SK-N-SH (cell line): ENCODE measurements at regions of chr22 and their contacts with region 1.

Region 1: DNA sequence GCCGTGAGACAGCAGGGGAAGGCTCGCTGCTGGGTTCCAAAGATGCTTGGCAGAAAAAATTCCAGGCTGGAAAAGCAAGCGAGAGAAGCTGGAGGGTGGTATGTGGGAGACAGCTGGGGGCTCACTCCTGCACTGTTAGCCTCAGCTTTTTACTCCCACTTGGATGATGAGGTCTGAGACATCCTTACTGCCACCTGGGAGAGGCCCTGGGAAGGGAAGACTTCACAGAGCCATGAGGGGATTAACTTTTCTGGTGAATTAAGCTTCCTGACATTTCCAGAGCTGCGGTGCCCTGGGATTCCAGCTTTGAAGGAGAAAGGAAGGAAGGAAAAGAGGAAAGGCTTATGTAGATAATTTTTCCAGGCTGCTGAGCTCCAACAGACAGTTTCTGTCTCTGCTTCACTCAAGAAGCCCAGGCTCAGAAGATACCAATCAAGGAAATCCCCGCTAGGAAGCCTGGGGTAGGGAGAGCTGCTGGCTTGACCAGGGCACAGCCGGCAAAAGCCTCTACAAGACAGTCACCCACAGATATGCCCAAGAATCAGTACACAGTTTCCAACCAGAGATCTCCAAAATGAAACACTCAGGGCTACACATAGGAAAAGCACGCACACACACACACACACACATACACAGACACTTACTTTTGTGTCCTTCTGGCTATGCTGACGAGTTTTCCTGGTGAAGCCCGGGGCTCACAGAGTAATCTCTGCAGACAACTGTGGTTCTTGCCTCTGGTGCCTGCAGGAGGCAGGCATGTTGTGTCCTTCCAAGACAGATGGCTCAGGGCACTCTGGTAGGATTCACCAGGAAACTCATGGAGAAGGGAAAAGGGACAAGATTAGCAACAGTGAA is 907 bp downstream of the MCHR1 start:
- DNase-seq: no peak
- H3K4me3 ChIP-seq: no peak overlapping the region; a peak in 1 of 4 replicates
- H3K27ac ChIP-seq: no peak overlapping the region
- H3K4me1 ChIP-seq: peaks cover 0 to 21% of the 10 kb centered on the region in 2 experiments; a peak in 2 of 4 replicates
- H3K27me3 ChIP-seq: no peaks in the 10 kb centered on the region
- CTCF ChIP-seq: no peak
- EP300 ChIP-seq: no peak
- RAD21 ChIP-seq: no peak; the same call in 1 of the 2 replicates

Region 2: GRCh38 chr22:40721266-40721665 is 41.1 kb after region 1 on chr22:
- CTCF ChIA-PET with region 1: interaction called, 10 read pairs
- POLR2A ChIA-PET with region 1: no interaction called
- DNase-seq: peak; percentile 50
- H3K4me3 ChIP-seq: no peak overlapping the region
- H3K27ac ChIP-seq: peak overlapping the region; percentile 68 to 81
- H3K4me1 ChIP-seq: peaks cover 0 to 8% of the 10 kb centered on the region in 2 experiments; a peak in 3 of 4 replicates
- H3K27me3 ChIP-seq: no peaks in the 10 kb centered on the region
- CTCF ChIP-seq: no peak
- EP300 ChIP-seq: peak in 1 of 2 experiments; percentile 75; a peak in 3 of 4 replicates
- RAD21 ChIP-seq: no peak

Region 3: DNA sequence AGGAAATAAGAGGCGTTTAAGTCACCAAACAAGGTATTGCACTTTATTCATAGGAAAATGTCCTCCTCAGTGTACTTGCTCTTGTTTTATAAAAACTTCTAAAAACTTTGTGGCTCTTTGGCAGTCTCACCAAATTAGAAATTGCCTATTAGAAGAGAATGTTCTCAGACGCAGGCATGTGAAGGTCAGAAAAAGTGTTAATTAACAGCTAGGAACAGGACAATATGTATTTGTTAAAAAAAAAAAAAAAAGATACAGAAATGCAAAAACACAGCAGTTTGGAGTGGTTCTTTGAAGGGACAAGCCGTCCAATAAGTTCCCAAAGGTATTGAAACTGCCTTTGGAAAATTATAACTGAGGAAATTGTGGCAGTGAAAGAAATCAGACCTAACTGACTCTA is 71.1 kb after region 1 on chr22:
- CTCF ChIA-PET with region 1: interaction called, 10 read pairs
- POLR2A ChIA-PET with region 1: no interaction called
- DNase-seq: no peak
- H3K4me3 ChIP-seq: no peak overlapping the region
- H3K27ac ChIP-seq: no peak overlapping the region
- H3K4me1 ChIP-seq: no peaks in the 10 kb centered on the region; a peak in 1 of 4 replicates
- H3K27me3 ChIP-seq: no peaks in the 10 kb centered on the region
- CTCF ChIP-seq: no peak
- EP300 ChIP-seq: no peak
- RAD21 ChIP-seq: no peak

Region 4: DNA sequence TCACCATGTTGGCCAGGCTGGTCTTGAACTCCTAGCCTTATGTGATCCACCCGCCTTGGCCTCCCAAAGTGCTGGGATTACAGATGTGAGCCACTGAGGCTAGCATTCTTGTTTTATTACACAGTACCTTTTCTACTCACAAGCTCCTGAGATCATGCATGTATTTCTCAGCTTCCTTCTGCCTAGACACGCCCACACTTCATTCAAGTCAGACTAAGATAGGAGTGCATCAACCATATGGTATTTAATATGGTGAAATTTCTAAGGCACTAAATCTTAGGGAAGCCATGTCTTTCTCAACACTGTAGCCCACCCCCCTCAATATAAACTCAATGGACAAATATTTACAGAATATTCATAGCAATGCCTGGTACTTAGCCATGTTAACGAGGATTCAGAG is 76.9 kb after region 1 on chr22:
- CTCF ChIA-PET with region 1: interaction called, 41 read pairs
- POLR2A ChIA-PET with region 1: no interaction called
- DNase-seq: no peak
- H3K4me3 ChIP-seq: no peak overlapping the region
- H3K27ac ChIP-seq: no peak overlapping the region
- H3K4me1 ChIP-seq: no peaks in the 10 kb centered on the region
- H3K27me3 ChIP-seq: no peaks in the 10 kb centered on the region
- CTCF ChIP-seq: no peak
- EP300 ChIP-seq: no peak
- RAD21 ChIP-seq: no peak

Region 5: DNA sequence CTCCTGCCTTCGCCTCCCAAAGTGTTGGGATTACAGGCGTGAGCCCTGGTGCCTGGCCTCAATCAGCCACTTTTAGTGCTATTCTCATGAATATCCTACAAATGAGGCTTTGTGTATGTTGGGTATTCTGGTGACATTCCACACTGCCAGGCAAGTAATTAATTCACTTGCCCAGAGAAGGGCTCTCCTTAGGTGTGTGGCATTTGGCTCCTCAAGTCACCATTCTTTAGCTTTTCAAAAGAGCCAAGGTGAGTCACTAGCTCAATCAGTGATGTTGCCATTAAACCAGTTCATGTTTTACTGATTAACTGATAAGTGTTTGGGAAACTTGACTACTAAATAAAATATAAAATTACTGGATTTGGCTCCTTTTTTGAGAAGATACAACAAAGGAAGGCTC is 86.8 kb after region 1 on chr22:
- CTCF ChIA-PET with region 1: interaction called, 12 read pairs
- POLR2A ChIA-PET with region 1: no interaction called
- DNase-seq: no peak
- H3K4me3 ChIP-seq: no peak overlapping the region
- H3K27ac ChIP-seq: no peak overlapping the region
- H3K4me1 ChIP-seq: no peaks in the 10 kb centered on the region
- H3K27me3 ChIP-seq: no peaks in the 10 kb centered on the region
- CTCF ChIP-seq: no peak
- EP300 ChIP-seq: no peak
- RAD21 ChIP-seq: no peak